Mammary epithelial cell (primary cell): ENCODE measurements at regions of chr6 and their contacts with region 1.

Region 1: GRCh38 chr6:149316798-149317655 is 485 bp upstream of the TAB2 start:
- DNase-seq: peak; percentile 91
- H3K4me3 ChIP-seq: peak overlapping the region; percentile 95 to 98 (median 96)
- H3K27ac ChIP-seq: peak overlapping the region; percentile 74
- H3K4me1 ChIP-seq: peaks cover 6% of the 10 kb centered on the region
- H3K27me3 ChIP-seq: no peaks in the 10 kb centered on the region
- CTCF ChIP-seq: no peak

Region 2: DNA sequence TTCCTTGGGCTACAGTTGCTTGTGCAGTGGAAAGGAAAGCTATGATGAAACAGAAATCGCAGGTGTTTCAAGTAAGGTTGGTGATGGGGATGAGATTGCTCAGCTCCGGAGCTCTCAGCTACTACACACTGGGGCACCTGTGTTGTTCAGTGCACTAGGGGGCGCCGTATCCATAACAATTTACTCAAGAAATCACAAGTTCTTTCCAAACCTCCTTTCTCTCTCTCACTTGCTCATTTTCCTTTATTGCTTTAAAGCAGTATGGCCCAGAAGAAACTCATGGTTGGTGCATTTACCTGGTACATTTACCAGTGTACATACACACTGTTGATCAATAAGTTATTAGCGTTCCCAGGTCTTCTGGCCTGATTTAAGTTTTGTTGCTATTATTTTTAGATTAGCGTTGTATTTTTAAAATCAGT is 234.7 kb before region 1 on chr6:
- CTCF ChIA-PET with region 1: interaction called, 10 read pairs
- dilution Hi-C with region 1: no loop called
- in situ Hi-C with region 1: no loop called
- intact Hi-C with region 1: loop called (anchors 5 kb)
- DNase-seq: peak; percentile 52
- H3K4me3 ChIP-seq: no peak overlapping the region
- H3K27ac ChIP-seq: no peak overlapping the region
- H3K4me1 ChIP-seq: peaks cover 15% of the 10 kb centered on the region
- H3K27me3 ChIP-seq: no peaks in the 10 kb centered on the region
- CTCF ChIP-seq: peak; percentile 79 to 81

Region 3: GRCh38 chr6:149190224-149190831 is 126.7 kb before region 1 on chr6:
- CTCF ChIA-PET with region 1: no interaction called
- dilution Hi-C with region 1: no loop called
- in situ Hi-C with region 1: no loop called
- intact Hi-C with region 1: loop called (anchors 2 kb)
- DNase-seq: peak; percentile 57
- H3K4me3 ChIP-seq: no peak overlapping the region
- H3K27ac ChIP-seq: no peak overlapping the region
- H3K4me1 ChIP-seq: no peaks in the 10 kb centered on the region
- H3K27me3 ChIP-seq: no peaks in the 10 kb centered on the region
- CTCF ChIP-seq: peak; percentile 40 to 59

Region 4: GRCh38 chr6:149271348-149272340 is 45.4 kb before region 1 on chr6:
- CTCF ChIA-PET with region 1: no interaction called
- dilution Hi-C with region 1: no loop called
- in situ Hi-C with region 1: no loop called
- intact Hi-C with region 1: no loop called
- DNase-seq: no peak
- H3K4me3 ChIP-seq: no peak overlapping the region
- H3K27ac ChIP-seq: no peak overlapping the region
- H3K4me1 ChIP-seq: no peaks in the 10 kb centered on the region
- H3K27me3 ChIP-seq: no peaks in the 10 kb centered on the region
- CTCF ChIP-seq: no peak

Region 5: DNA sequence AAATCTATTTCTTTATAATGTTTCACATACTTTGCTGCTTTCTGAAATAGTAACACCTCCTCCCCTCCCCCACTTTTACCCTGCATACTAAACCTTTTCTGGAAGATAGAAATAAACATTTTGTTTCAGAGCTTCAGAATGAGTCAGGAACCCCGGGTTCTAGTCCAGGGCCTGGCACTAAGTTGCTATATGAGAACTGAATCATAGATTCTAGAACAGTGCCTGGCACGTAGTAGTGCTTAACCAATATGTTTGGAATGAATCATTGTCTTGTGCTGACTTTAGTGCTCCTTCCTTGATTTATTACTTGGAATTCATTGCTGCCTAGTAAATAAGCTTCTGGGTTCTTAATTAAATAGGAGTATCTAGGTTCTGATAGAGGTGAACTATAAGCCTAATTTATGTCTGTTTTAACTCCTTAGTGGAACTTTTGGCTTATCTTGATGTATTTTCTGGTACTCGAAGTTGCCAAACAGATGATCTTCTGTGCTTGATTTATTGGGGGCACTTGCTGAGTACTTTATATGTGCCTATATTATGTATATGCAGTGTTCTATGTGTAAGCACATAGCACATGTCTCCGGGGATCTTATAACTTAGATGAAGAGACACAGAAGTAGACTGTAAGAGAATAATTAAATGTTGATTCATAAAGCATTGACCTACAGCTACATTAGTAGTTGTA is 19.0 kb after region 1 on chr6:
- CTCF ChIA-PET with region 1: no interaction called
- dilution Hi-C with region 1: no loop called
- in situ Hi-C with region 1: no loop called
- intact Hi-C with region 1: loop called (anchors 1 kb)
- DNase-seq: peak; percentile 78
- H3K4me3 ChIP-seq: peak overlapping the region in 2 of 3 experiments; percentile 7 to 35
- H3K27ac ChIP-seq: peak overlapping the region; percentile 83
- H3K4me1 ChIP-seq: peaks cover 51% of the 10 kb centered on the region
- H3K27me3 ChIP-seq: no peaks in the 10 kb centered on the region
- CTCF ChIP-seq: no peak

Region 6: GRCh38 chr6:149362289-149362688 is 45.3 kb after region 1 on chr6:
- CTCF ChIA-PET with region 1: no interaction called
- dilution Hi-C with region 1: no loop called
- in situ Hi-C with region 1: no loop called
- intact Hi-C with region 1: loop called (anchors 5 kb)
- DNase-seq: peak; percentile 26
- H3K4me3 ChIP-seq: no peak overlapping the region
- H3K27ac ChIP-seq: peak overlapping the region; percentile 36
- H3K4me1 ChIP-seq: peaks cover 12% of the 10 kb centered on the region
- H3K27me3 ChIP-seq: no peaks in the 10 kb centered on the region
- CTCF ChIP-seq: no peak

Region 7: GRCh38 chr6:149405823-149406765 is 89.1 kb after region 1 on chr6:
- CTCF ChIA-PET with region 1: no interaction called
- dilution Hi-C with region 1: no loop called
- in situ Hi-C with region 1: no loop called
- intact Hi-C with region 1: loop called (anchors 2 kb)
- DNase-seq: peak; percentile 19
- H3K4me3 ChIP-seq: no peak overlapping the region
- H3K27ac ChIP-seq: no peak overlapping the region
- H3K4me1 ChIP-seq: peaks cover 5% of the 10 kb centered on the region
- H3K27me3 ChIP-seq: no peaks in the 10 kb centered on the region
- CTCF ChIP-seq: no peak